Heart left ventricle (tissue), 16 donors: ENCODE measurements at regions of chr2 and their contacts with region 1.

Region 1: DNA sequence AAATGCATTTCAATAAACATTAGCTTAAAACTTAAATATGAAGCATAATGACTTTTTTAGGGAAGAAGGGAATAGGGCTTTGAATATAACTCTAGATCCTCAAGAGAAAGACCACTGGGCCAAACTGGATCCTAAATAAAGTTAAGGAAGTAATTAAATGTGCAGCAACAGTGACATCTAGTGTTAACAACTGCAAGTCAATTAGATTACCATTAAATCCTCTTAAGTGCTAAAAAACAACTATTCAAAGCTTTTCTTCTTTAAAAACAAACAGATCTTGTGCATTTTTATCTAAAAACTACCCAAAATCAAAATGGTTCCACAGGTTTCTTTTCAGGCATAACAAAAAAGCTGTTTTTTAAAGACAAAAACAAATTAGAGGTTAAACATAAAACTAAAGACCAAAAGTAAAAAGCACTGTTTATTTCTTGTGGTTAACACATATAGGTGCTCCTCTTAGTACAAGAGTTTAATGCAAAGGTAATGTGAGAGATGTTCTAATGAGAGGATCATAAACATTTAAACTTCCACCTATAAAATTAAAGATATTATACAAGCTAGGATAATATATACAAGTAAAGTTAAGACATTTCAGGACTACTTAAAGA is 111.4 kb downstream of the THADA start:
- DNase-seq: no peak
- ATAC-seq: peak; percentile 43 to 73 (median 62)
- H3K4me3 ChIP-seq: no peak overlapping the region
- H3K27ac ChIP-seq: peak overlapping the region in 7 of 12 donors; percentile 11 to 72 (median 42)
- H3K4me1 ChIP-seq: peaks cover 0 to 56% (median 20%) of the 10 kb centered on the region in 12 donors
- H3K27me3 ChIP-seq: no peaks in the 10 kb centered on the region
- CTCF ChIP-seq: peak; percentile 56 to 84 (median 68)
- POLR2A ChIP-seq: no peak

Region 2: GRCh38 chr2:42828487-42829425 is 655.7 kb before region 1 on chr2:
- intact Hi-C with region 1: loop called in 9 of 10 experiments (anchors 1 to 5 kb)
- DNase-seq: peak; percentile 74 to 86 (median 81)
- ATAC-seq: peak; percentile 85 to 94 (median 89)
- H3K4me3 ChIP-seq: peak overlapping the region in 2 of 12 donors; percentile 2 to 46
- H3K27ac ChIP-seq: peak overlapping the region in 8 of 12 donors; percentile 3 to 74 (median 46)
- H3K4me1 ChIP-seq: peaks cover 0 to 30% (median 20%) of the 10 kb centered on the region in 12 donors
- H3K27me3 ChIP-seq: no peaks in the 10 kb centered on the region
- CTCF ChIP-seq: peak; percentile 87 to 96 (median 92)
- POLR2A ChIP-seq: no peak

Region 3: GRCh38 chr2:42944779-42945415 is 539.5 kb before region 1 on chr2:
- intact Hi-C with region 1: loop called in 9 of 10 experiments (anchors 1 to 10 kb)
- DNase-seq: no peak
- ATAC-seq: no peak
- H3K4me3 ChIP-seq: no peak overlapping the region
- H3K27ac ChIP-seq: peak overlapping the region in 1 of 12 donors; percentile 6
- H3K4me1 ChIP-seq: peaks cover 0 to 32% (median 16%) of the 10 kb centered on the region in 12 donors
- H3K27me3 ChIP-seq: no peaks in the 10 kb centered on the region
- CTCF ChIP-seq: no peak
- POLR2A ChIP-seq: no peak

Region 4: GRCh38 chr2:43024515-43025011 is 459.9 kb before region 1 on chr2:
- intact Hi-C with region 1: loop called in 1 of 10 experiments (anchors 5 kb)
- DNase-seq: peak; percentile 68 to 81 (median 77)
- ATAC-seq: peak in 3 of 4 donors; percentile 78 to 82 (median 78)
- H3K4me3 ChIP-seq: no peak overlapping the region
- H3K27ac ChIP-seq: peak overlapping the region in 1 of 12 donors; percentile 39
- H3K4me1 ChIP-seq: peaks cover 0 to 37% (median 27%) of the 10 kb centered on the region in 12 donors
- H3K27me3 ChIP-seq: no peaks in the 10 kb centered on the region
- CTCF ChIP-seq: peak; percentile 69 to 96 (median 82)
- POLR2A ChIP-seq: no peak

Region 5: DNA sequence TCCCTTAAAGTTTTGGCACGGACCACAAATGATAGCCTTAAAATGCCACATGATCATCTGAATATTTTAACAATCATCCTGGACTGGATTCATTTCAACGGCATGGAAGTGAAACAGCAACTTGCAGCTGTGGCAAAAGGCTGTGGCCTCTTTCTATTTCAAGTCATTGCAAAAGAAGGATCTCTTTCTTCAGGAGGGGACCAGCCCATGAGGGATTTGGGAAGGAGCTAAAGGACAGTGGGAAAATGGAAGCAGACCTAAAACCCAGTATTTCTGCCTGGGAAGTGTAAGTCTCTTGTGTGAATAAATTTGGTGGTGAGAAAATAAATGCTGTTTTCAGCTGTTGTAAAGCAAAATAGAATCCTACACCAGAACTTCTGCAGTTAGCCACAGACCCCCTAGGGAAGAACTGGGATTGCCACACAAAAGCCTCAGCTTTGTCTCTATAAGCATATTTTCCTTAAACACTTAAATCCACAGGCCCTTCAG is 150.7 kb before region 1 on chr2:
- intact Hi-C with region 1: loop called in 1 of 10 experiments (anchors 5 kb)
- DNase-seq: peak in 3 of 5 donors; percentile 56 to 70 (median 56)
- ATAC-seq: peak; percentile 36 to 69 (median 51)
- H3K4me3 ChIP-seq: peak overlapping the region in 7 of 12 donors; percentile 0 to 23 (median 9)
- H3K27ac ChIP-seq: peak overlapping the region; percentile 54 to 94 (median 85)
- H3K4me1 ChIP-seq: peaks cover 13 to 69% (median 59%) of the 10 kb centered on the region in 12 donors
- H3K27me3 ChIP-seq: no peaks in the 10 kb centered on the region
- CTCF ChIP-seq: no peak
- POLR2A ChIP-seq: peak in 1 of 2 donors; percentile 15

Region 6: DNA sequence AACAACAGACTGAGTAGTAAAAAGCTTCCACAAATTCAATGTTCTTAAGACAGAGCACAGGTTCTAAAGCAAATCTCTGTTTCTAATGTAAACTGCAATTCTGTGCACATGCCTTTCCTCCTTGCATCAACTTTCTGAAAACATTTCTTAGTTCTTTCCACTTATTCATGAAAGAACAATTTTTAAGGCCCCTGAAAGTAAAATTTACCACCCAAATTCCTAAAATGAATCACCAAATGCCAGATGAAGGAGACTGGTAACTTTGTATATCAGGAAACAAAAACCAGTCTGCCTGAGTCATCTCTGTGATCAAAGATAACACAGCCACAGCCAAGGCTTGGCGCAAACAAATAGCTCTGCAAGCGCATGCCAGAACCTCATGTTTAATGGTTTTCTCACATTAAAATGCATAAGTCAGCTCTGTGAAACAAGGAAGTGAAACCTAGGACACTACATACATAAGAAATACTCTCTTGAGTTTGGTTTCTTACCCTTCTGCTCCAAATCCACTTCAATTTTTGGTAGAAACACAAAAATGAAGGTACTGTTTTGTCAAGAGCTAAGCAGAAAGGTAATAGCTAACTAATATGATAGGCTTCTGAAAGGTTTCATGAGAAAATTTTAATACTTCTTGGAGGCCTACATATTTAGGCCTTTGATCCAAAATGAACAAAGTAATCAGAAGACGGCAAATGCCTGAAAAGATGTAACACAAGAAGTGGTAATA is 58.0 kb before region 1 on chr2:
- intact Hi-C with region 1: no loop called
- DNase-seq: peak; percentile 30 to 68 (median 37)
- ATAC-seq: peak in 3 of 4 donors; percentile 68 to 79 (median 68)
- H3K4me3 ChIP-seq: no peak overlapping the region
- H3K27ac ChIP-seq: peak overlapping the region in 7 of 12 donors; percentile 14 to 80 (median 30)
- H3K4me1 ChIP-seq: peaks cover 0 to 34% (median 8%) of the 10 kb centered on the region in 12 donors
- H3K27me3 ChIP-seq: no peaks in the 10 kb centered on the region
- CTCF ChIP-seq: no peak
- POLR2A ChIP-seq: no peak

Region 7: GRCh38 chr2:43531251-43531650 is 46.8 kb after region 1 on chr2:
- intact Hi-C with region 1: no loop called
- DNase-seq: no peak
- ATAC-seq: peak in 1 of 4 donors; percentile 39
- H3K4me3 ChIP-seq: no peak overlapping the region
- H3K27ac ChIP-seq: no peak overlapping the region
- H3K4me1 ChIP-seq: peaks cover 0 to 15% (median 0%) of the 10 kb centered on the region in 12 donors
- H3K27me3 ChIP-seq: no peaks in the 10 kb centered on the region
- CTCF ChIP-seq: no peak
- POLR2A ChIP-seq: no peak

Region 8: DNA sequence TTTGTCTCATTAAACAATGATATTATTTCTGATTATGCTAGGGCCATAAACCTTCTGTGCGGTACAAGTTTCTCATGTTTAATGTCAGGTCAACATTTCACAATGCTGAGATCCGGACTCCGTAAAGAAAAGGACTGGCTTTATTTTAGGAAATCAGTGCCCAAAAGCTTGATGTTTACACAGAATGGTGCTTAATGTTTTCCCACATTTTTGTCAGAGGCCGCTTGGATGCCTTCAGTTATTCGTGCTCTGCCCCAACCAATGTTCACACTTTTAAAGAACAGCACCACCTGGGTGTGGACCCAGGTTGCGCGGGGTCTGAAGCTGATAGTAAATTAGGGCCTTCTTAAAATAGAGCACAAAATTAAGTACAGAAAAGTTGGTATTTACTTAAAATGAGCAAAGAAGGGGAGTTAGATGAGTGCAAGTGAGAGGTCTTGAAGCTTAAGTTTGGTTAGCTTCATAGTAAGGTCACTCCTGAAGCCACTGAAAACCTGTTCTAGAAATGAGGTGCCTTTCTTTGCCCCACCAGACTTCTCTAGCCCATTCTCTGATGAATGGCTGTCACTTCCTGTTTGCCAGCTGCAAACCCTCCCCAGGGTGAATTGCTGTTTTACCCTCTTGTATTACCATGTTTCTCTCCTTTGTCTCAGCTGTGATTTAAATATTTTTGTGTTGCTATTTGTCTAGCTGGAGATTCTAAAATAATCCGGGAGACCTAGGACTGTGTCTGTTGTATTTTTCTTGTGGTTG is 811.4 kb after region 1 on chr2:
- intact Hi-C with region 1: no loop called
- DNase-seq: no peak
- ATAC-seq: no peak
- H3K4me3 ChIP-seq: no peak overlapping the region
- H3K27ac ChIP-seq: no peak overlapping the region
- H3K4me1 ChIP-seq: peaks cover 0 to 9% (median 0%) of the 10 kb centered on the region in 12 donors
- H3K27me3 ChIP-seq: no peaks in the 10 kb centered on the region
- CTCF ChIP-seq: peak in 1 of 12 donors; percentile 7
- POLR2A ChIP-seq: no peak